Caco-2 (cell line): ENCODE measurements at regions of chr14 and their contacts with region 1.

Region 1: DNA sequence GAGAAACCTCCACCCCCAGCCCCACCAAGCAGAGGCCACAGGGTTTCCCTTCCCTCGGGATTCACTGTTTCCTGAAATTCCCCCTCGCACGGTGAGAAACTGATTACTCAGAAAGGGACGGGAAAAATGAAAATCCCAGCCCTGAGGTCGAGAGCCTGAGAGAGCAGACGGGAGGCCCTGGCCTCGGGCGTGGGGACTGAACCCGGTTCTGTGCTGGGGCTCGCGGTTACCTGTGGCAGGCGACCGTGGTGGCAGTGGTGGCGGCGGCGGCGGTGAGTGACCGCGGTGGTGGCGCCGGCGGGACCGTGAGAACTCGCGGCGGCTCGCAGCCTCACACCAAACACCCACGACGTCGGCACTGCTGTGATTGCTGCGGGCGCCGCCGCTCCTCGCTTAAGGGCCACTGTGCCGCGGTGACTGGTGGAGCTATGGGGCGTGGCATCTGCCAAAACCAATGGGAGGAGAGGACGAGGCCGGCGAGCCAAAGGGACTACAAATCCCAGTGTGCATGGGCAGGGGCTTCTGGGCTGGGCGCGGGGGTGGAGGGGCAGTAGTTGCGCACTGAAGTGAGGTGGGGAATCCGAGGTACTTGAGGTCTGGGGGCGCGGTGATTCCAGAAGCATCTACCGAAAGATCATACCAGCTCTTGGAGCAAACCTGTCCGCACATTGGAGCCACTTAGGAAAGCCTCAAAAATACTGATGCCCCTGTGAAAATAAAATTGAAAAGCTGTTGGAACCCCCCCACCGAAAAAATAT is at the start of gene LGMN:
- DNase-seq: peak; percentile 96
- H3K4me3 ChIP-seq: peak within 1 kb of the TSS; percentile 75
- H3K4me3 Mint-ChIP-seq: peak within 1 kb of the TSS; percentile 90
- H3K27ac Mint-ChIP-seq: peak within 1 kb of the TSS; percentile 86
- H3K4me1 ChIP-seq: peaks cover 5% of the 10 kb centered on the region; the same call in 1 of the 2 replicates
- H3K4me1 Mint-ChIP-seq: peaks cover 7% of the 10 kb centered on the region
- H3K27me3 ChIP-seq: no peaks in the 10 kb centered on the region
- H3K27me3 Mint-ChIP-seq: no peaks in the 10 kb centered on the region
- CTCF ChIP-seq: no peak
- total RNA-seq, gene LGMN: 84.2 and 94.2 TPM in 2 replicates

Region 2: DNA sequence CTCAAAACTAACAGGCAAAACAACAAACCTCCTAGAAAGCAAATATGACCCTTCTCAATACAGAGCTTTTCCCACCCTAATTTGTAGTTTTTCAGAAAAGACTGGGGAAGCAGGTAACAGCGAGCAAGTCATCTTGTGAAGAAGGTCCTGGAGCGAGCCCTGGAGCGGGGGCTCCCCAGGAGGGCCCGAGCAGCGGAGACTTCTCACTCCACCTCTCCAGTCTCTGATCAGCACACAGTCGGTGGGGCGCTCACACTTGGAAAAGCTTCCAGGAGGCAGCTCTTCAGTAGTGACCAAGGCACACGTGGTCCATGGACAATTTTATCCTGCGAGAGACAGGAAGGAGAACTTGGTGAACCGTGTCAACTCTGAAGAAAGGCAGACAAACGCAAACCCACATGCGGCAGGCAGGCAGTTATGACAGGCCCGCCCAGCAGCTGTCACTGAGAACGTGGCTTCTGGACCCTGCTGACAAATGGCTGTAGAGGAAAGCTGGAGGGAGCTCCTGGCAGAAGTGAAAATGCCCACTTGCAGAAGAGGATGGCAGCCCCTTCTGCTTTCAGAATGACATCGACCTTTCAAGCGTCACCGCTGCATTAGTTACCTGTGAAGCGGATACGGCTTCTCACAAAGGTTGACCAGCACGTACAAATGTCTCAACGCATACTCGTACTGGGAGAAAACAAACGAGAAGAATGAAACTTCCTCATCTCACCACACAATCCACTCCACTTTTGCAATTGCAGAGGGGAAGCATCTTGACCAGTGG is 44.2 kb before region 1 on chr14:
- CTCF ChIA-PET with region 1: no interaction called
- POLR2A ChIA-PET with region 1: interaction called, 11 read pairs
- intact Hi-C with region 1: no loop called
- DNase-seq: no peak
- H3K4me3 ChIP-seq: no peak overlapping the region
- H3K4me3 Mint-ChIP-seq: no peak overlapping the region
- H3K27ac Mint-ChIP-seq: no peak overlapping the region
- H3K4me1 ChIP-seq: no peaks in the 10 kb centered on the region
- H3K4me1 Mint-ChIP-seq: no peaks in the 10 kb centered on the region
- H3K27me3 ChIP-seq: no peaks in the 10 kb centered on the region
- H3K27me3 Mint-ChIP-seq: no peaks in the 10 kb centered on the region
- CTCF ChIP-seq: no peak

Region 3: GRCh38 chr14:92719890-92720323 is 28.5 kb before region 1 on chr14:
- CTCF ChIA-PET with region 1: interaction called, 4 read pairs
- POLR2A ChIA-PET with region 1: interaction called, 18 read pairs
- intact Hi-C with region 1: loop called (anchors 2 kb)
- DNase-seq: peak; percentile 34 to 38
- H3K4me3 ChIP-seq: no peak overlapping the region
- H3K4me3 Mint-ChIP-seq: no peak overlapping the region
- H3K27ac Mint-ChIP-seq: peak overlapping the region; percentile 42
- H3K4me1 ChIP-seq: peaks cover 29% of the 10 kb centered on the region
- H3K4me1 Mint-ChIP-seq: peaks cover 19% of the 10 kb centered on the region
- H3K27me3 ChIP-seq: no peaks in the 10 kb centered on the region
- H3K27me3 Mint-ChIP-seq: no peaks in the 10 kb centered on the region
- CTCF ChIP-seq: no peak

Region 4: DNA sequence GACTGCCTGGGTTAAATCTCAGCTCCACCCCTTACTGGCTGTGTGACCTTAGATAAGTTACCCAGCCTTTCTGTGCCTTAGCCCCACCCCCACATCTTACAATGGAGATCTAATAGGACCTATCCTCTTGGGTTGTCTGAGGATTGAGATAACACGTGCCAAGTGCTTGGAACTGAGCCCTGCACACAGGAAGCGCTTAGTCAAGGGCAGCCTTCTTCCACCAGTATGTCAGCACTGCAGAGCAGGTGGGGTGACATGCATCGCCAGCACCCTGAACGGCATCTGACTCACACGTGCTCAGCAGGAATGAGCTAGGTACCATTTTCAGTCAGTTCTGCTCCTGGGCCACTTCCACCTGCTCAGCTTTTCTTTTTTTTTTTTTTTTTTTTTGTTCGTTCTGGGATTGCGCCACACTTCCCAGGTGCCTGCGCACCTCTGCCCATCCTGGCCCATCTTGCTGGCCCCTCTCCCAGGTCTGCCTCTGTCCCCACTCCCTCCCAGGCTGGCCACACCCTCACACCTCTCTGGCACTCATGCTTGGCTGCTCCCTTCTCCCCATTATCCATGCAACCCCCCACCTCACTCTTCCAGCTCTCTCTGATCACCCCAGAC is 19.6 kb before region 1 on chr14:
- CTCF ChIA-PET with region 1: interaction called, 3 read pairs
- POLR2A ChIA-PET with region 1: interaction called, 18 read pairs
- intact Hi-C with region 1: no loop called
- DNase-seq: no peak
- H3K4me3 ChIP-seq: no peak overlapping the region
- H3K4me3 Mint-ChIP-seq: no peak overlapping the region
- H3K27ac Mint-ChIP-seq: no peak overlapping the region
- H3K4me1 ChIP-seq: peaks cover 36% of the 10 kb centered on the region
- H3K4me1 Mint-ChIP-seq: peaks cover 25% of the 10 kb centered on the region
- H3K27me3 ChIP-seq: no peaks in the 10 kb centered on the region
- H3K27me3 Mint-ChIP-seq: no peaks in the 10 kb centered on the region
- CTCF ChIP-seq: no peak

Region 5: GRCh38 chr14:92783816-92784431 is 35.5 kb after region 1 on chr14:
- CTCF ChIA-PET with region 1: no interaction called
- POLR2A ChIA-PET with region 1: interaction called, 3 read pairs
- intact Hi-C with region 1: loop called (anchors 1 kb)
- DNase-seq: peak in 1 of 2 experiments; percentile 58
- H3K4me3 ChIP-seq: no peak overlapping the region
- H3K4me3 Mint-ChIP-seq: no peak overlapping the region
- H3K27ac Mint-ChIP-seq: no peak overlapping the region
- H3K4me1 ChIP-seq: no peaks in the 10 kb centered on the region
- H3K4me1 Mint-ChIP-seq: no peaks in the 10 kb centered on the region
- H3K27me3 ChIP-seq: no peaks in the 10 kb centered on the region
- H3K27me3 Mint-ChIP-seq: no peaks in the 10 kb centered on the region
- CTCF ChIP-seq: peak; percentile 44 to 54

Region 6: DNA sequence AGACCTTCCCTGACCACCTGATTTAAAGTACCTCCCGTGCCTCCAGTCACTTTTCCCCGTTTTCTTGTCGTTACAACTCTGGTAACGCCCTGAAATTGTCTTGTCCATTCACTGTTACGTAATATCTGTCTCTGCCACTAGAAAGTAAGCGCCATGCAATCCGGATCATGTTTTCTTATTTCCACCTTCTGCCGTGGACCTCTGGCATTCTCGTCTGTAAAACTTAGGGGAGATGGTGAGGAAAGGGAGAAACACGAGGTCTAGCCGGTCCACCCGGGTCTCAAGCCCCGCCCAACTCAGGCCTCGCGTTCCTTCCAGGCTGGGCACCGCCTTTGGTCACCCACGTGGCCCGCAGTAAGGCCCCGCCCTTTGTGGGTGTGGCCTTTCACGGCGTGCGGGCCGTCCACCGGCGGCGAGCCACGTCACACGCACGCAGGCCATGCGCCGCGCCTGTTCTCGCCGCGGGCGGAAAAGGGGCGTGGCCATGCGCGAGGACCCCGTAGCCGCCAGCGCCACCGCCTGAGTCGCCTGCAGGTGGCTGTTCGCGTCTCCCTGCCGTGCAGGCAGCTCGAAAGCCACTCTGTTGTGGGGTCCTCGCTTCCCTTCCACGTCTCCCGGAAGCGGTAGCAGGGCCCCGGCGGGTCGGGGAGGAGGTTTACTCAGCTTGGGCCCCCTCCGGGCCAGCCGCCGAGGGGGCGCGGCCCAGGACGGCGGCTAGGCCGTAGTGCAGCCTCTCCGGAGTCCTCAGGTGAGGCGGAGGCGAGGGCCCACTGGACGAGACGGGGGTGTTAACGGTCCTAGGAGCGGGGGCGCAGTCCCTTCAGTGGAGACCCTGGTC is 45.5 kb after region 1 on chr14 and contains the start of gene GOLGA5:
- CTCF ChIA-PET with region 1: no interaction called
- POLR2A ChIA-PET with region 1: interaction called, 7 read pairs
- intact Hi-C with region 1: loop called (anchors 1 kb)
- DNase-seq: peak; percentile 97 to 99
- H3K4me3 ChIP-seq: peak within 1 kb of the TSS; percentile 54
- H3K4me3 Mint-ChIP-seq: peak within 1 kb of the TSS; percentile 97
- H3K27ac Mint-ChIP-seq: peak within 1 kb of the TSS; percentile 99
- H3K4me1 ChIP-seq: peaks cover 5% of the 10 kb centered on the region; the same call in 1 of the 2 replicates
- H3K4me1 Mint-ChIP-seq: peaks cover 13% of the 10 kb centered on the region
- H3K27me3 ChIP-seq: no peaks in the 10 kb centered on the region
- H3K27me3 Mint-ChIP-seq: no peaks in the 10 kb centered on the region
- CTCF ChIP-seq: no peak
- total RNA-seq, gene GOLGA5: 25.8 and 33.1 TPM in 2 replicates

Region 7: DNA sequence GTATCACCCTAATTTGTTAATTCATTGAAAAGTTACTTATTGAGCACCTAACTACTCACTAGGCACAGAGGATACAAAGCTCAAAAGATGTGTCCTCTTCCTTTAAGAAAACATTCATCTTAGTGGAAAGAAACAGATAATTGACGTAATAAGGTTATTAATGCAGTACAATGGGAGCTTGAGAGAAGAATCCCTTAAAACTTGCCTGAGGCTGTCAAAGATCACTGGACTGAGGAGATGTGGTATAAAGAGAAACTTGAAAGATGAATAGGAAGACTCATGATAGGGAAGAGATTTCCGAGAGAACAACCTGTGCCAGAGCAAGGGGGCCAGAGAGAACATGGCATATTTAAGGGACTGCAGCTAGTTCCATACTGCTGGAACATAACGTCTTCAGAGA is 64.8 kb after region 1 on chr14:
- CTCF ChIA-PET with region 1: no interaction called
- POLR2A ChIA-PET with region 1: no interaction called
- intact Hi-C with region 1: no loop called
- DNase-seq: no peak
- H3K4me3 ChIP-seq: no peak overlapping the region
- H3K4me3 Mint-ChIP-seq: no peak overlapping the region
- H3K27ac Mint-ChIP-seq: no peak overlapping the region
- H3K4me1 ChIP-seq: no peaks in the 10 kb centered on the region
- H3K4me1 Mint-ChIP-seq: no peaks in the 10 kb centered on the region
- H3K27me3 ChIP-seq: no peaks in the 10 kb centered on the region
- H3K27me3 Mint-ChIP-seq: no peaks in the 10 kb centered on the region
- CTCF ChIP-seq: no peak

Region 8: DNA sequence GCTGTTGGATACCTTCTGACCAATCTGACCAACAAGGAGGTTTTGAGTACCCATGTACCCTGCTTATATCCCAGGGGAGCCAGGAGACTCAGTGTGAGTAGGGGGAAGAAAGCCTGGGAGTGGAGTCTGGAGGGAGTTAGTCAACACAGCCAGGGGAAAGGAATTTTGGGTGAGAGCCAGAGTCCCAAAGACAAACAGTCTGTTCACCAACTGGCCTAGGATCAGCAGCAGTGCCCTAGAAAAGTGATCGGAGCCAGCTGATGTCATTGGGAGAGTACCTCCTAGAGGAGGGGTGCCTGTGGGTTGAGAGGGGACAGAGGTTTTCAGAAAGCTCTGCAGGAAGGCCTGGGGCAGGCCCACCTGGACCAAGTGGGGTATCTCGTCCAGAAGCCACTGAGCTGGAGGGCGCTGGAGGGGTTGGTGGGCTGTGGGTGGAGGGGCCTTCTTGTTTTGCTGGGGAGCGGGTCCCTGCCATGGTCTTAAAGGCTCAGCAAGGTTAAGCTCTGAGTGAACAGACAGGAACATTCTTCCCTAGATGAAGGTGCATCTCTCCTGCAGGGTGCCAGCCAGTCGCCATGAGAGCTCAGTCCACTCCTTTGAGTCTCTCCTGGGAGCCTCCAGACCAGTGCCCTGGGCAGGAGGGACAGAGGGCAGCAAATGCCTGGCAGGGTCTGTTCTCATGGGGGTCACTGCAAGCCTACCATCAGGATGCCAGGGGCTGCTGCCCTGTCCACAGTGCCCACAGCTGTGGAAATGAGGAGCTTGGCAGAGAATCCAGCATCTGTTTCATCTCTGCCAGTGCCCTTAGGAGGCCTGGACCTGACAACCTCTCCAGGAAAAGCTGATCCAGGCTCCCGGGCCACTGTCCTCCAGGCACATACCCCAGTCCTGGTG is 238.1 kb after region 1 on chr14:
- CTCF ChIA-PET with region 1: no interaction called
- POLR2A ChIA-PET with region 1: no interaction called
- intact Hi-C with region 1: no loop called
- DNase-seq: no peak
- H3K4me3 ChIP-seq: no peak overlapping the region
- H3K4me3 Mint-ChIP-seq: no peak overlapping the region
- H3K27ac Mint-ChIP-seq: no peak overlapping the region
- H3K4me1 ChIP-seq: no peaks in the 10 kb centered on the region
- H3K4me1 Mint-ChIP-seq: no peaks in the 10 kb centered on the region
- H3K27me3 ChIP-seq: no peaks in the 10 kb centered on the region
- H3K27me3 Mint-ChIP-seq: no peaks in the 10 kb centered on the region
- CTCF ChIP-seq: no peak